ENCODE measurements at regions of chr5 and their contacts with region 1.

Region 1: DNA sequence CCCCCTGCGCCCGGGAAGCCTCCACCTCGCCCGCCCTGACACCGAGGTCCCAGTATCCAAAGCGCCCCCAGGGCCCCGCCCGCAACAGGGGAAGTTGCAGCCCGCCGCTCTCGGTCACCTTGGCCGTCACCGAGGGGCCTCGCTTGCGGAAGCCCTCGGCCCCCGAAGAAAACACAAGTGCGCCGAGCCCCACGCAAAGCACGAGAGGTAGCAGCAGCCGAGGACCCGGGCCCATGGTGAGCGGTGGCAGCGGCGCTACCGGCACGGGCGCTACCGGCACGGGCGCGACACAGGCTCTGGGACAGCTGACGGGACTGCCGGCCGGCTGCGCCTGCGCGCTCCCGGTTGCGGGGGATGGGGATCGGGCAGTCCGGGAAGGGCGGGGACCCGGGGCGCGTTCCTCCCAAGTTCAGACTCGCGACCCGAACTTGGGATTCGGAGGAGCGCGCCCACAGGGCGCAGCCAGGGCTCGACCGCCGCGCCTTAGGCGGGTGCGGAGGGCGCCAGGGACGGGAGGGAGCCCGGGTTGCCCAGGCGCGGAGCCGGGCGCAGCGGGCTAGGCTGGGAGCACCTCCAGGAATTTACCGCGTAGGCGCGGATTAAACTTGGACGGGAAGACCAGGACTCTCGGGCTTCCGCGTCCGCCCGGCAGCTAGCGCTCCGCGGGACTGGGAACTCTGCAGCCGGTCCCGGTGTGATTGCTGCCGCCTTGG is at the start of gene PPIC:
- DNase-seq: peak; percentile 49
- H3K4me3 ChIP-seq: peak within 1 kb of the TSS; percentile 60
- H3K27ac ChIP-seq: no peak within 1 kb of the TSS
- H3K4me1 ChIP-seq: peaks cover 7% of the 10 kb centered on the region
- H3K27me3 ChIP-seq: peaks cover 73% of the 10 kb centered on the region
- CTCF ChIP-seq: no peak
- total RNA-seq, gene PPIC: not detected in 2 replicates

Region 2: DNA sequence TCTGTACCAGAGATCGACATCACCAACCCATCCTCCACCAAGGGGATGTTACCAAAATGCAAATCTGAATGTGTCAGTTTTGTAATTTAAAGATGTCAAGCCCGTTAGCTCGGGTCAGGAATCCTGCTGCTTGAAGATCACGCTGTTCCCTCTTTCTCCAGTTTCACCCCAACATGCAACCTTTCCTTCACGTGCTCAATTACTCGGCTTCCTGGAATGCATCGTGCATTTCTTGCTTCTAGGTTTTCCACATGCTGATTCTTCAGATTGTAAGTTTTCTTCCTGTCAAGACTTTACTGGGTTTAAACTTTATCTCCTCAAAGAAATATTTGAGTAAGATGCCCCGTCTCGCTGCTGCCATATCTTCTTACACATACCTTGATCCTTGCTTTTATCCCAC is 471.2 kb before region 1 on chr5:
- CTCF ChIA-PET with region 1: no interaction called
- POLR2A ChIA-PET with region 1: interaction called, 10 read pairs
- intact Hi-C with region 1: no loop called
- DNase-seq: no peak
- H3K4me3 ChIP-seq: no peak overlapping the region
- H3K27ac ChIP-seq: no peak overlapping the region
- H3K4me1 ChIP-seq: no peaks in the 10 kb centered on the region
- H3K27me3 ChIP-seq: peaks cover 14% of the 10 kb centered on the region
- CTCF ChIP-seq: no peak

Measured in A673 (cell line).